ENCODE measurements at regions of chr11 and their contacts with region 1.

Region 1: GRCh38 chr11:64778508-64779346 is at the start of gene SF1:
- DNase-seq: peak; percentile 94 to 100 (median 100)
- ATAC-seq: peak; percentile 79 to 84
- H3K4me3 Mint-ChIP-seq: peak within 1 kb of the TSS; percentile 90 to 97 (median 94)
- H3K27ac Mint-ChIP-seq: peak within 1 kb of the TSS; percentile 98 to 100 (median 100)
- H3K4me1 Mint-ChIP-seq: peaks cover 20 to 68% (median 60%) of the 10 kb centered on the region in 4 donors
- H3K27me3 Mint-ChIP-seq: peaks cover 0 to 5% (median 0%) of the 10 kb centered on the region in 5 donors
- polyA plus RNA-seq, gene SF1: 87.0 to 138 (median 96.6) TPM

Region 2: GRCh38 chr11:64583296-64584232 is 195.2 kb before region 1 on chr11:
- POLR2A ChIA-PET with region 1: no interaction called
- DNase-seq: no peak
- ATAC-seq: no peak
- H3K4me3 Mint-ChIP-seq: no peak overlapping the region
- H3K27ac Mint-ChIP-seq: no peak overlapping the region
- H3K4me1 Mint-ChIP-seq: no peaks in the 10 kb centered on the region
- H3K27me3 Mint-ChIP-seq: peaks cover 7 to 22% (median 14%) of the 10 kb centered on the region in 5 donors

Region 3: DNA sequence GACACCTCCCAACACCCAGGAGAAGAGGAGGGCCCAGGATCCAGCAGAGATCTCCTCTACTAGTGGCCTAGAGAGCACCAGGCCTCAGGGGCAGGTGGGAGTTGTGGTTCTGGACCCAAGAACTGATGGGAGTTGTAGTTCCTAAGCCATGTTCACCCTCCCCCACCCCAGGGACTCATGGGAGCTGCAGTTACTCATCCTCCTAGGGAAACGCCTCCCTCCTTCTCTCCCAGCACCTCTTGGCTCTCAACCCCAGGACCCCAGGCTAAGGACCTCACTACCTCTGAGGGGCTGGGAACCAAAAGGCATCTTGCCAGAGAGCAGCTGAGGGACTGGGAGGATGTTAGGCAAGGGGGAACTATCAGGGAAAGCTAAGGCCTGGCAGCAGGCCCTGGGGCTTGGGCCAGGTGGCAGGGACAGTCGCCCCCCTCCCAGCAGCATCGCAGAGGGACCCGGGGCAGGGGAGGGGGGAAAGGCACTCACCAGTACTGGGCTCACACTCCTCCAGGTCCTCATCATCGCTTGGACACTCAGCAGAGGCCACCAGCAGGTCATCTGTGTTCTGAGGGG is 158.8 kb before region 1 on chr11:
- POLR2A ChIA-PET with region 1: no interaction called
- DNase-seq: no peak
- ATAC-seq: no peak
- H3K4me3 Mint-ChIP-seq: no peak overlapping the region
- H3K27ac Mint-ChIP-seq: peak overlapping the region in 2 of 10 donors; percentile 42 to 63
- H3K4me1 Mint-ChIP-seq: peaks cover 6 to 21% (median 12%) of the 10 kb centered on the region in 4 donors
- H3K27me3 Mint-ChIP-seq: no peaks in the 10 kb centered on the region

Region 4: GRCh38 chr11:64767344-64768299 is 11.1 kb before region 1 on chr11:
- POLR2A ChIA-PET with region 1: interaction called, 2,320 read pairs
- DNase-seq: peak; percentile 66 to 93 (median 82)
- ATAC-seq: peak; percentile 15 to 30
- H3K4me3 Mint-ChIP-seq: peak overlapping the region; percentile 53 to 88 (median 78)
- H3K27ac Mint-ChIP-seq: peak overlapping the region; percentile 83 to 99 (median 94)
- H3K4me1 Mint-ChIP-seq: peaks cover 49 to 98% (median 93%) of the 10 kb centered on the region in 4 donors
- H3K27me3 Mint-ChIP-seq: no peaks in the 10 kb centered on the region

Region 5: DNA sequence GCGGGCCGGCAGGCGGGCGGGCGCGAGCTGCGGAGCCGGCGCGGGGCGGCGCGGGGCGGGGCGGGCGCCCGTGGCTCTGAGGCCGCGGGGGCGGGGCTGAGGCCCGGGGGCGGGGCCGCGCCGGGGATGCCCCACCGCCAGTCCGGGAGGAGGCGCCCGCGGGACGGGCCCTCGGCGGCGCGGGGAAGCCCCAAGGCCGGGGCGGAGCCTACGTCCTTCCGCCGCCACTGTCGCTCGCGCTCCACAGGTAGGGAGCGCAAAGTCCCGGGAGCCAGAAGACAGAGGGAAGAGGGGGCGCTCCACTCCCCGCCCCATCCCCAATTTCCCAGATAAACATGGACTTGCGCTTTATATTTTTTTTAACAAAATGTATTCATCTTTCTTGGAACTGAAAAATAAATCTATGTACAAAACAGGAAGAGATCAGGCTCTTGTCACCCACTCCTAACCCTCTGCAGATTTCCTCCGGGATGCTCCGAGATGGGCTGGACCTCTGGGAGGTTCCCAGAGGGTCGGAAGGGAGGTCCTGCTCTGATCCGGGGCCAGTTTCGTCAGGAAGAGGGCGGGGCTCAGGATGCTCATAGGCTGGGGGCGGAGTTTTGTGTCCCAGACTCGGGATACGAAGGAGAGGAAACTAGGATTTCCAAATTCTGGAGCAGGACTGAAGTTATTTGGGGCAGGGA is 24.6 kb after region 1 on chr11 and contains the start of gene MAP4K2:
- POLR2A ChIA-PET with region 1: interaction called, 135 read pairs
- DNase-seq: peak; percentile 72 to 95 (median 84)
- ATAC-seq: peak; percentile 86 to 89
- H3K4me3 Mint-ChIP-seq: peak within 1 kb of the TSS; percentile 81 to 91 (median 87)
- H3K27ac Mint-ChIP-seq: peak within 1 kb of the TSS; percentile 79 to 95 (median 92)
- H3K4me1 Mint-ChIP-seq: peaks cover 22 to 52% (median 46%) of the 10 kb centered on the region in 4 donors
- H3K27me3 Mint-ChIP-seq: no peaks in the 10 kb centered on the region
- polyA plus RNA-seq, gene MAP4K2: 26.6 to 55.5 (median 30.3) TPM

Region 6: DNA sequence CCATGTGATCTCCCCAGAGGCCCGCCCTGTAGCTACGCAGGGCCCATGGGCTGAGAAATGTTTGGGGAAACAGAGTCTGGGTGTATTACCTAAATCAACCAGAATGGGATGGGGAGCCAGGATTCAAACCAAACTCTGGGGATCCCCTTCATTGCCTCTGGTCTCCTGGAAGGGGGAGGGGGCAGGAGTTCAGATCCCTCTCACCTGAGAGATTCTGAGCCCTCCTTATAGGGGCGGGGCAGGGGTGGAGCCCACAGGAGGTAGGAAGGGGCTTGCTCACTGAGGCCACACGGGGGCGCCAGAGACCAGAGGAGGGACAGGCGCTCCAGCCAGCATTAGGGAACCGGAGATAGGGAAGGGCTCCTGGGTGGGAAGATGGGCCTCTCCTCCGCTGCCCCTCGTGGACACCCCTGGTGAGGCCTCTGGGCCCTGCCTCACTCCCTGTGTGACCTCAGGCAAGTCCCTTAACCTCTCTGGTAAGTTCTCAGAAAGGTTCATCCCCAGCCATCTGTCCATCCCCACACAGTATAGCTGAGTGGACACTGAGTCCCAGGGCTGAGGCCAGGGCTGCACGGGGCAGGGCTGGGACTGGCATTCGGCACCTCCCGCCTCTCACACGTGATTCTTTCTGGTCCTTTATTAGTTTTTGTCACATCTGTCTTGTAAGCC is 68.4 kb after region 1 on chr11:
- POLR2A ChIA-PET with region 1: interaction called, 37 read pairs
- DNase-seq: peak; percentile 81 to 98 (median 90)
- ATAC-seq: peak; percentile 46 to 56
- H3K4me3 Mint-ChIP-seq: peak overlapping the region in 6 of 10 donors; percentile 36 to 74 (median 56)
- H3K27ac Mint-ChIP-seq: peak overlapping the region in 9 of 10 donors; percentile 32 to 88 (median 79)
- H3K4me1 Mint-ChIP-seq: peaks cover 35 to 69% (median 64%) of the 10 kb centered on the region in 4 donors
- H3K27me3 Mint-ChIP-seq: no peaks in the 10 kb centered on the region

Region 7: DNA sequence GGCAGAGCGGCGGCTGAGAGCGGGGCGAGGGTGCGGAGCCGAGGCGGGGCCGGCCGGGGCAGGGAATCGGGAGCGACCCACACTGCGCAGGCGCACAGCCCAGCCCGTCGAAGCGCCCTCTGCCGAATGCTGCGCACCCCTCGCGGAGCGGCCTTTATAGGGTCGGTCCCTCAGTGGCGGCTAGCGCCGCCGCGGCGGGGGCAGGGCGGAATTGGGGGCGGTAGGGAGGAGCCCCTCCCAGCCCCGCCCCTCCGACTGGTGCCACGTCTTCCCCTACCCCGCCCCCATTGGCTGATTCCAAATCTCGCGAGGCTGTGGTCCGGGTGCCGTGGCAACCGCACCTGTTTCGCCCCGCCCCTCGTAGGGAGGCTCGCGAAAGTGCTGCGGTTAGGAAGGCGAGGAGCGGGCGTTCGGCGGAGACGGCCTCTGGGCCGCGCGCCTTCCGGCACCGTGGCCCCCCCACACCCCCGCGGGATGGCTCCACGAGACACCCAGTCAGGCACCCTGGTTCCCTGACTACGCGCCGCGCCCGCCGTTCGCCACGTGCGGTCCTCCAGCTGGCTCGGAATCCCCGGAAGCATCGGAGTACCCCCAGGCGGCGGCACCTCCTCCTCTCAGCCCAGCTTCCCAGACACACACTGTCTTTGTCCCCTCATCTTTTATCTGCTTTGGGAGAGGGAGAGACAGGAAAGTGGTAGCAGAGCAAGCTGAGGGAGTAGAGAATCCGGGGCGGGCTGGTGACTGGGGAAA is 99.9 kb after region 1 on chr11 and contains the start of gene EHD1:
- POLR2A ChIA-PET with region 1: interaction called, 46 read pairs
- DNase-seq: peak; percentile 99 to 100 (median 100)
- ATAC-seq: peak; percentile 73 to 81
- H3K4me3 Mint-ChIP-seq: peak within 1 kb of the TSS; percentile 92 to 99 (median 98)
- H3K27ac Mint-ChIP-seq: peak within 1 kb of the TSS; percentile 90 to 99 (median 96)
- H3K4me1 Mint-ChIP-seq: peaks cover 41 to 71% (median 64%) of the 10 kb centered on the region in 4 donors
- H3K27me3 Mint-ChIP-seq: no peaks in the 10 kb centered on the region
- polyA plus RNA-seq, gene EHD1: 137 to 164 (median 154) TPM

Region 8: GRCh38 chr11:64905516-64906313 is 127.0 kb after region 1 on chr11:
- POLR2A ChIA-PET with region 1: no interaction called
- DNase-seq: no peak
- ATAC-seq: no peak
- H3K4me3 Mint-ChIP-seq: no peak overlapping the region
- H3K27ac Mint-ChIP-seq: no peak overlapping the region
- H3K4me1 Mint-ChIP-seq: peaks cover 4 to 8% (median 6%) of the 10 kb centered on the region in 4 donors
- H3K27me3 Mint-ChIP-seq: no peaks in the 10 kb centered on the region

Region 9: GRCh38 chr11:65134386-65135253 is 355.9 kb after region 1 on chr11 and contains the start of gene SYVN1:
- POLR2A ChIA-PET with region 1: interaction called, 11 read pairs
- DNase-seq: peak; percentile 84 to 97 (median 90)
- ATAC-seq: peak; percentile 89 to 90
- H3K4me3 Mint-ChIP-seq: peak within 1 kb of the TSS; percentile 94 to 100 (median 98)
- H3K27ac Mint-ChIP-seq: peak within 1 kb of the TSS; percentile 99 to 100 (median 100)
- H3K4me1 Mint-ChIP-seq: peaks cover 26 to 57% (median 45%) of the 10 kb centered on the region in 4 donors
- H3K27me3 Mint-ChIP-seq: no peaks in the 10 kb centered on the region
- polyA plus RNA-seq, gene SYVN1: 7.9 to 10.6 (median 8.2) TPM

Measured in naive thymus-derived CD8-positive, alpha-beta T cell (primary cell).